MCF 10A (cell line): ENCODE measurements at regions of chr2 and their contacts with region 1.

Region 1: DNA sequence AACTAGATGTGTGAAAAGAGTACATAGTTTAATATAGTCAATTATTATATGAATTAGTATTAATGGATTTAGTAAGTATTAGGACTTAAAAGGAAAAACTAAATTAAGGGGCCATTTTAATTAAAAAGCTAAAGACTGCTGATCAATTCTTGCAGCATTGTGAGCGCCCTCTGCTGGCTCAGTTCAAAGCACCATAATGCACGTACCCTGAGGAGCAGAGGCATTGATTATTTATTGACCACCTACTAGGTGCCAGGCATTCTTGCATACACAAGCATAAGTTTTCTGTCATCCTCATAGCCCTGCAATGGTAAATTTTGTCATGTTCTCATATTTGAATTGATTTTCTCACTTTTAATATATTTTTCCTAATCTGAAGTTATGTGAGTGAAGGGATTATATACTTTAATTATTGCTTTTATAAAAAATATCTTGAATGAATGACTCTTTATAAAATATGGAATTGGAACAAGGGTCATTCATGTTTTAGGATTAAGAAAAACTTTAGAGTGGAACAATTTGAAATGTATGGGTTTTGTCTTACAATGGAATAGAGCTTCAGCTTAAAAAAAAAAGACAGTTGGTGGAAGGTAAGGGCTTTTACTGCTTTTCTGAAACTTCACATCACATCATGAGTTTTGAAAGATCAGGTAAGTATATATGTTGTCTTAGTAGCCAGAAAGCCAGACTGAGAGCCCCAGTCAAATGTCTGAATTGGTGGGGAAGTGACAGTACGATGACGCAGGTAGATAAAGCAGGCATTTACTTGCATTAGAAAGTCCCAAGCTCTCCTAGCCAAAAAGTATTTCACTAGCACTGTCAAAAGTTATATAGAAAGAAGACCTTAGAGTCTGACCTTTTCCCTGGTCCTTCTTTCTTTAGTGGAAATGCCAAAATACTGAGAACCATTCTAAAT is 9.7 kb downstream of the ITGA4 start:
- DNase-seq: peak; percentile 63
- H3K4me3 Mint-ChIP-seq: no peak overlapping the region
- H3K27ac Mint-ChIP-seq: no peak overlapping the region
- H3K4me1 Mint-ChIP-seq: no peaks in the 10 kb centered on the region
- H3K27me3 Mint-ChIP-seq: no peaks in the 10 kb centered on the region
- CTCF ChIP-seq: peak; percentile 65

Region 2: GRCh38 chr2:181077128-181077709 is 389.7 kb before region 1 on chr2:
- CTCF ChIA-PET with region 1: interaction called, 12 read pairs
- POLR2A ChIA-PET with region 1: no interaction called
- intact Hi-C with region 1: loop called (anchors 1 kb)
- DNase-seq: peak; percentile 70
- H3K4me3 Mint-ChIP-seq: no peak overlapping the region
- H3K27ac Mint-ChIP-seq: no peak overlapping the region
- H3K4me1 Mint-ChIP-seq: peaks cover 23% of the 10 kb centered on the region
- H3K27me3 Mint-ChIP-seq: no peaks in the 10 kb centered on the region
- CTCF ChIP-seq: peak; percentile 43

Region 3: DNA sequence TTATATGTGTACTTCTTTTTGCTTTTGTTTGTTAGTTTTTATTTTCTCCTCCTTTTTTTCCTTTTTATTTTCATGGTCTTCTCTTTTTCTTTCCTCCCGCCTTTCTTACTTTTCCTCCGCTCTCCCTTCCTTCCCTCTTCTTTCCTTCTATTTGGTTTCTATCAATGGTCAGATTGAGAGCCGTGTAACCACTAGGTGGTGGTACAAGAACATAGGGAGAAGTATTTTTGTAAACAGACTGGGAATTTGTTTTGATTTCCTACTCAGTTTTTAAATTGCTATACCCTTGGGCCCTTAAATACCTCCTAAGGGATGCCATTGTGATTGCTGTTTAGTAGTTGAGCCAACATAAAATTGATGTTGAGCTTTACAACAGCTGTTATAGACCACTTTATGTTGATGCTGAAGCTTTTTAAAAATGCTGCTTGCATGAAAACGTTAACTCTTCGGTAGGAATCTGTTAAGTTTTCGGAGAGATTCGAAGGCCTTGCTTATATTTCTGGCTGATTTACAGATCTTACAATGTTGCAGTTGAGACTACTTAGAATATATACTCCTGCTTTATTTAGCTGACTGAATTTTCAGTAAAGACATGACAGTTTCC is 362.3 kb before region 1 on chr2:
- CTCF ChIA-PET with region 1: interaction called, 50 read pairs
- POLR2A ChIA-PET with region 1: no interaction called
- intact Hi-C with region 1: loop called (anchors 1 kb)
- DNase-seq: peak; percentile 63
- H3K4me3 Mint-ChIP-seq: no peak overlapping the region
- H3K27ac Mint-ChIP-seq: no peak overlapping the region
- H3K4me1 Mint-ChIP-seq: peaks cover 8% of the 10 kb centered on the region
- H3K27me3 Mint-ChIP-seq: no peaks in the 10 kb centered on the region
- CTCF ChIP-seq: peak; percentile 70

Region 4: DNA sequence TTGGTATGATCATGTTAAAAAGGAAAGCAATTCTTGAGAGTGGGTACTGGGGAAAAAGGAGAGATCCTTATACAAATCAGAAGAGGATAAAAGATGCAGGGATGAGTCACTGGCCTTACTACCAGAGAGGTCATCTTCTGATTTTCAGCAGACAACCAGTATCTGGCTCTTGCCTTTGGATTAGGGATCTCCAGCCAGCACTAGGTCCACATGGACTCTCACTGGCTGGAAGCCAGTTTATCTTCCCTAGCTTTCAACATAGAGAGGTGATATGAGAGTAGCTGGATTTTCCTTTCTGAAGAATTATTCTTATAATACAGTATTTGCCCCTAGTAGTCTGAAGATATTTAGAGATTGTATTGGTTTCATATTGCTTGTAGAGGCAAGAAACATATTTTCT is 159.8 kb after region 1 on chr2:
- CTCF ChIA-PET with region 1: no interaction called
- POLR2A ChIA-PET with region 1: no interaction called
- intact Hi-C with region 1: no loop called
- DNase-seq: peak; percentile 12
- H3K4me3 Mint-ChIP-seq: no peak overlapping the region
- H3K27ac Mint-ChIP-seq: no peak overlapping the region
- H3K4me1 Mint-ChIP-seq: no peaks in the 10 kb centered on the region
- H3K27me3 Mint-ChIP-seq: no peaks in the 10 kb centered on the region
- CTCF ChIP-seq: no peak